ENCODE measurements at regions of chr11 and their contacts with region 1.

Region 1: DNA sequence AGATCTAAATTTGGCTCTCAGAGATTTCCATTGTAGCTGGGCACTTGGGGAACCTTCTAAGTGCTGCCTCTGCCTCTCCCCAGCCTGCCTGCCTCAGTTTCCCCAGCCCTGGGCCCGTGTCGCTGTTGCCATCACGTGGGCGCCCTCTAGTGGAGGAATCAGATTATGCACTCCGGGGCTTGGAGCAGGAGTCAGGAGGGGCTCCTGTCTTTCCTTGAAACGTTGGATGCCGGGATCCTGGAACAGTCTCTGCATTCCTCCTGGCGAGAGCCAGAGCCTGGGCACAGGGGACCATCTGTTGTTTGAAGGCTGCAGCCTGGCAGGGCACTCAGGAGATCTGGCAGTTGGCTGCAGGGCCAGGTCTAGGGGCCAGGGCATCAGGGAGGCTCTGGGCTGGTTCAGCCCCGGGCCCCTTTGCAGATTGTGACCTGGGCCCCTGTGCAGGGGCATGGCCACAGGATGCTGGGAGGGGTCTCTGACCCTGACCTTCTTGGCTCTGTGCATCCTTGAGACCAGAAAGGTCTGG is 71.6 kb downstream of the LRP5 start:
- DNase-seq: peak in 3 of 4 donors; percentile 51 to 82 (median 51)
- ATAC-seq: peak; percentile 19
- H3K4me3 ChIP-seq: no peak overlapping the region
- H3K27ac ChIP-seq: no peak overlapping the region
- H3K4me1 ChIP-seq: peaks cover 25 to 48% of the 10 kb centered on the region in 2 donors
- H3K27me3 ChIP-seq: no peaks in the 10 kb centered on the region
- CTCF ChIP-seq: peak; percentile 87 to 89

Region 2: GRCh38 chr11:68263444-68264035 is 120.5 kb before region 1 on chr11:
- intact Hi-C with region 1: loop called in 1 of 2 experiments (anchors 5 kb)
- DNase-seq: no peak
- ATAC-seq: no peak
- H3K4me3 ChIP-seq: no peak overlapping the region
- H3K27ac ChIP-seq: no peak overlapping the region
- H3K4me1 ChIP-seq: no peaks in the 10 kb centered on the region
- H3K27me3 ChIP-seq: no peaks in the 10 kb centered on the region
- CTCF ChIP-seq: no peak

Region 3: DNA sequence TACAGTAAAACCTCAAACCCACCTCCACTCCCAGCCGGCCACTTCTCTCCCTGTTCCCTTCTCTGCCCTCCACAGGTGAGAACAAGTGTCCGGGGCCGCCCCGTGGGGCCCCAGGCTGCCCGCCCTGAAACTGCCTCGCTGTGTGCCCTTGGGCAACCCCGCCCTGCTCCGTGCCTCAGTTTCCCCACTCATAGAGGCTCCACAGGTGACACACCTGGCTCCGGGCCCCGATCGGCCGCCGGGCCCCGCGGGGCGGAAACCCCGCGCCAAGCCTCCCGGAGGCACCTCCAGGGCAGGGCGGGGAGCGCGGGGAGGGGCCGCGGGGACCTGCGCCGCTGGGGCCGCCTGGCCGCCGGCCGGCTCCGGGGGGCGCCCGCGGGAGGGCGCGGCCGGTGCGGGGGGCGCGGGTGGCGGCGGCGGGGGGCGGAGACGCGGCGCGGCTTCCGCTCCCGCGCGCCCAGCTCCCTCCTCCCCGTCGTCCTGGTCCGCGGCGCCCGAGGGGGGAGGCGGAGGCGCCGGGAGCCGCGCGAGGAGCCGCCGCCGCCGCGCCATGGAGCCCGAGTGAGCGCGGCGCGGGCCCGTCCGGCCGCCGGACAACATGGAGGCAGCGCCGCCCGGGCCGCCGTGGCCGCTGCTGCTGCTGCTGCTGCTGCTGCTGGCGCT is 71.8 kb before region 1 on chr11 and contains the start of gene LRP5:
- intact Hi-C with region 1: loop called in 1 of 2 experiments (anchors 10 kb)
- DNase-seq: peak in 2 of 4 donors; percentile 48 to 78
- ATAC-seq: peak; percentile 32
- H3K4me3 ChIP-seq: peak within 1 kb of the TSS; percentile 42 to 53
- H3K27ac ChIP-seq: peak within 1 kb of the TSS in 1 of 2 donors; percentile 66
- H3K4me1 ChIP-seq: peaks cover 8 to 50% of the 10 kb centered on the region in 2 donors
- H3K27me3 ChIP-seq: peaks cover 0 to 47% of the 10 kb centered on the region in 2 donors
- CTCF ChIP-seq: no peak
- polyA plus RNA-seq, gene LRP5: 54.7 to 71.9 (median 62.5) TPM

Measured in left lung (tissue), 14 donors.